BJ (cell line): ENCODE measurements at regions of chr17 and their contacts with region 1.

Region 1: GRCh38 chr17:31877911-31878702 is 19.1 kb upstream of the COPRS start:
- DNase-seq: no peak
- H3K4me3 ChIP-seq: no peak overlapping the region
- H3K27me3 ChIP-seq: no peaks in the 10 kb centered on the region
- CTCF ChIP-seq: no peak

Region 2: GRCh38 chr17:31900877-31901276 is 22.8 kb after region 1 on chr17:
- CTCF ChIA-PET with region 1: interaction called, 4 read pairs
- POLR2A ChIA-PET with region 1: interaction called, 11 read pairs
- DNase-seq: no peak
- H3K4me3 ChIP-seq: peak overlapping the region; percentile 77
- H3K27me3 ChIP-seq: no peaks in the 10 kb centered on the region
- CTCF ChIP-seq: no peak

Region 3: GRCh38 chr17:31926100-31926729 is 48.1 kb after region 1 on chr17:
- CTCF ChIA-PET with region 1: no interaction called
- POLR2A ChIA-PET with region 1: interaction called, 13 read pairs
- DNase-seq: no peak
- H3K4me3 ChIP-seq: no peak overlapping the region
- H3K27me3 ChIP-seq: no peaks in the 10 kb centered on the region
- CTCF ChIP-seq: no peak